ENCODE measurements at regions of chr5 and their contacts with region 1.

Region 1: DNA sequence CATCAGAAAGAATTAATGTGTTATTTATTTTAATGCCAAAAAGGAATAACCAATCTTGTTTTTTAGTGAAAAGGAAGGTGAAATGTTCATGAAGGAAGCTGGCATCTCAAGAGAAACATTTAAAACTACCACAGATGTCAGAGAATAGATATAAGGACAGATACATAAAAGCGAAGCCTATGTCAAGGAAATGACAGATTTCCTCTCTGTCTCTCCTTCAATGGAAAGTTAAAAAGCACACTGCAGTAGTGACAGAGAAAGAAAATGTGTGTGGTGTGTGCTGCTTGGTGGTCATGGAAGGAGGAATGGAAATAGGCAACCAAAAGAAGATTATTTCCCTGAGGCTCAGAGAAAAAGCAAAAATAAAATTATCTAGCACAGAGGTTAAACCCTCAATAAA is 9.2 kb downstream of the WNT8A start:
- DNase-seq: no peak
- H3K4me3 ChIP-seq: no peak overlapping the region
- H3K27ac ChIP-seq: no peak overlapping the region
- H3K4me1 ChIP-seq: no peaks in the 10 kb centered on the region
- H3K27me3 ChIP-seq: peaks cover 6% of the 10 kb centered on the region
- CTCF ChIP-seq: no peak
- EP300 ChIP-seq: no peak
- POLR2A ChIP-seq: no peak

Region 2: DNA sequence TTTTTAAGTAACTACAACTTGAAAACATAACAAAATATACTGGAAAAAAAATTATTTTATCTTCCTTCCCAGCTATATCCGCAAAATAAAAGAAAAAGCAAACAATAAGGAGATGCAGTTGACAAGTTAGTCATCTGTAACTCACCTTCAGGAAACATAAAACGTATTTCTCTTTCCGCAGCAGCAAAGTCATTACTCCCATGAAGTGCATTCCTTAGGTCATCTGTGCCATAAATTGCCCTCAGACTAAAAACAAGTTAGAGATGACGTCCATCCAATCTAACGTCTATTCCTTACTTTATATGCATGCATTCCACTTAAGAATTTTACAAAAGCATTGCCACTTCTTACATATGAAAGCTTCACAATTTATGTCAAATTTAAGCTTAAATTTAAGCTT is 35.3 kb after region 1 on chr5:
- in situ Hi-C with region 1: loop called in 1 of 4 experiments (anchors 5 kb)
- intact Hi-C with region 1: no loop called
- DNase-seq: no peak
- H3K4me3 ChIP-seq: no peak overlapping the region
- H3K27ac ChIP-seq: no peak overlapping the region
- H3K4me1 ChIP-seq: peaks cover 0 to 4% (median 0%) of the 10 kb centered on the region in 4 donors
- H3K27me3 ChIP-seq: no peaks in the 10 kb centered on the region
- CTCF ChIP-seq: no peak
- EP300 ChIP-seq: no peak
- POLR2A ChIP-seq: no peak